OCI-LY7 (cell line): ENCODE measurements at regions of chr1 and their contacts with region 1.

Region 1: GRCh38 chr1:155859234-155859829 is at the start of gene SYT11:
- DNase-seq: peak; percentile 99
- H3K4me3 ChIP-seq: peak within 1 kb of the TSS; percentile 79
- H3K27ac ChIP-seq: peak within 1 kb of the TSS; percentile 89
- H3K4me1 ChIP-seq: peaks cover 60% of the 10 kb centered on the region
- CTCF ChIP-seq: no peak
- total RNA-seq, gene SYT11: 41.6 and 41.8 TPM in 2 replicates

Region 2: GRCh38 chr1:155816351-155816750 is 43.0 kb before region 1 on chr1:
- CTCF ChIA-PET with region 1: no interaction called
- POLR2A ChIA-PET with region 1: interaction called, 11 read pairs
- intact Hi-C with region 1: no loop called
- DNase-seq: peak; percentile 57
- H3K4me3 ChIP-seq: peak overlapping the region; percentile 34
- H3K27ac ChIP-seq: peak overlapping the region; percentile 73
- H3K4me1 ChIP-seq: peaks cover 29% of the 10 kb centered on the region
- CTCF ChIP-seq: no peak

Region 3: DNA sequence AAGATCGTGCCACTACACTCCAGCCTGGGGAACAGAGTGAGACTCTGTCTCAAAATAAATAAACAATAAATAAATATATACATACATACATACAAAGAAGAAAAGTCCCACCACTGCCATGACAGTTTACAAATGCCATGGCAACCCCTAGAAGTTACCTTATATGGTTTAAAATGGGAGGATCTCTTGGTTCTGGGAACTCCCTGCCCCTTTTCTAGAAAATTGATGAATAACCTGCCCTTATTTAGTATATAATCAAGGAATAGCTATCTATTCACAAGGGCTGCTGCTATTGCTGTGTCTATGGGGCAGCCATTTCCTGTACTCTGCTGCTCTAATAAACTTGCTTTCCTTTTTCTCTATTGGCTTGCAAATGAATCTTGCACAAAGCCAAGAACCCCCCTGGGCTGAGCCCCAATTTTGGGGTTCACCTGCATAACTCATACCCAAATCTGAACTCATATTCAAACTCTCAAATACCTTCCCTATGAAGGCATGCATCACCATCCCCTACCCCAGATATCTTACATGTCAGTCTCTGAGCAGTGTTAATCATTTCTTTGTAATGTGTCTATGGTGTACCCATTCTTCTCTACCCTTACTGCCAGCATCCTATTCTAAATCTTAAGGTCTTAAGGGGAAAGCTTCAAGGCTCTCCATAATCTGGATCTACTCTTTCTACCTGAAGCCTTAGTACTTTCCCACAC is 11.4 kb before region 1 on chr1:
- CTCF ChIA-PET with region 1: interaction called, 5 read pairs
- POLR2A ChIA-PET with region 1: interaction called, 9 read pairs
- intact Hi-C with region 1: loop called (anchors 1 kb)
- DNase-seq: no peak
- H3K4me3 ChIP-seq: no peak overlapping the region
- H3K27ac ChIP-seq: peak overlapping the region; percentile 1
- H3K4me1 ChIP-seq: peaks cover 42% of the 10 kb centered on the region
- CTCF ChIP-seq: no peak

Region 4: DNA sequence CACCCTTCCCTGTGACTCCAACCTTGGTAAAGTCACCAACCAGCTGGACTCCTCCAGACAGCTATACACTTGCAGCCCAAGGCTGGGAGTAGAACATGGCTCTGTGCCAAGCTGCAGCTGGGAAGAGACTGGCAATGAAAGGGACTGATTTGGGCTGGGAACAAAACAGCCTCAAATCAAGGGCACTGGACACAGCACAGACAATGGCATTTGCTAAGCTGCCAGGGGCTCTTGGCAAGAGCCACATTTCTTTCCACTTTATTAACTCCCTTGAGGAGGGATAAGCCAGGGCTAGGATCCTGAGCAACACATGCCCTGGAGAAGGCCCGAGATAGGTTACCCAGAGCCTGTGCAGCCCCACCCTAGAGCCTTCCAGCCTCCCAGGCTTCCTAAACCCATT is 12.1 kb after region 1 on chr1:
- CTCF ChIA-PET with region 1: no interaction called
- POLR2A ChIA-PET with region 1: interaction called, 42 read pairs
- intact Hi-C with region 1: no loop called
- DNase-seq: no peak
- H3K4me3 ChIP-seq: no peak overlapping the region
- H3K27ac ChIP-seq: no peak overlapping the region
- H3K4me1 ChIP-seq: peaks cover 24% of the 10 kb centered on the region
- CTCF ChIP-seq: no peak

Region 5: DNA sequence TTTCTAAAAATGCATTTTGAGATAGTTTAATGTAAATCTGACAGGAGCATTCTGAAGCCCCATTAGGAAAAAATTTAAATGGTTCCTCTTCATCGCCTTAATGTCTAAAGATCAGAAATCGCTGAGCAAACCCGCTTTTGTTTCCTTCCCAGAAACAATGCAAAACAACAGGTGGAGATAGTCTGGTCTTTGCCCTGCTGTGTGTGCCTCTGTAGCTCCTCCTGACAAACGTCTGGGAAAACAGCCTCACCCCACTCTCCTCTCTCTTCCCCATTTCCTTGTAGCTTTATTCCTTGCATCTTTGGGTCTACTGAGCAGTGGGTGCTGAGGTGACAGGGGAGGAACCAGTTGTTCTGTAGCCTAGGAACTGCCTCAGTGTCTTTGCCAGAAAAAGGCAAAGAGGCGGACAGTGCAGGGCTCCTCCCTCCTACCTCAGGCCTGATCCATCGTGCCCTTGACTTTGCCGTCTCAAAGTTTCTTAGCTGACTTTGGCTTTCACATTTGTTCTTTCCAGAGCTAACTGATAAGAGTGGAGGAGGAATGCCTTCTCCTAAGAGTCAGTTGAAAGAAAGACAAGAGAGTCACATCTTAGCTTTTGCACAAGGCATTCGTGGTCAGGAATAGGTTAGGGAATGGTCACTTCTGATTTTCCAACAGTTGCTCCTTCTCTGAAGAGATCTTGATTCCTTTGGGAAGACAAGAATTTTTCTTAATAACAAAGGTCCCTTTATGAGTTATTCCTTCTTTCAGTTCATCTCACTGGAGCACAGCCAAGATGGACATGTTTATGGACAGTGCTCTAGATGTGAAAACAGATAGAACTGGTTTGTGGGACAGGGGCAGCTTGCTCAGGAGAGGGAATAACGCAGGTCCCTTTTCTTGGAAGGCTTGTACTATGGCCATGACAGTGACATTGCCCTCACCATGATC is 25.0 kb after region 1 on chr1:
- CTCF ChIA-PET with region 1: interaction called, 6 read pairs
- POLR2A ChIA-PET with region 1: interaction called, 46 read pairs
- intact Hi-C with region 1: loop called (anchors 1 kb)
- DNase-seq: peak; percentile 70
- H3K4me3 ChIP-seq: peak overlapping the region; percentile 53
- H3K27ac ChIP-seq: peak overlapping the region; percentile 96
- H3K4me1 ChIP-seq: peaks cover 83% of the 10 kb centered on the region
- CTCF ChIP-seq: no peak

Region 6: GRCh38 chr1:156483397-156483796 is 624.1 kb after region 1 on chr1:
- CTCF ChIA-PET with region 1: no interaction called
- POLR2A ChIA-PET with region 1: no interaction called
- intact Hi-C with region 1: no loop called
- DNase-seq: no peak
- H3K4me3 ChIP-seq: no peak overlapping the region
- H3K27ac ChIP-seq: peak overlapping the region; percentile 34
- H3K4me1 ChIP-seq: peaks cover 81% of the 10 kb centered on the region
- CTCF ChIP-seq: no peak